ENCODE measurements at regions of chr1 and their contacts with region 1.

Region 1: GRCh38 chr1:110630839-110631663 is 24.9 kb upstream of the KCNA2 start:
- DNase-seq: peak; percentile 68 to 76
- H3K4me3 ChIP-seq: no peak overlapping the region
- H3K4me3 Mint-ChIP-seq: no peak overlapping the region
- H3K27ac Mint-ChIP-seq: no peak overlapping the region
- H3K4me1 ChIP-seq: no peaks in the 10 kb centered on the region
- H3K4me1 Mint-ChIP-seq: no peaks in the 10 kb centered on the region
- H3K27me3 ChIP-seq: no peaks in the 10 kb centered on the region
- H3K27me3 Mint-ChIP-seq: peaks cover 12% of the 10 kb centered on the region
- CTCF ChIP-seq: peak; percentile 47 to 69

Region 2: GRCh38 chr1:110766025-110766647 is 135.1 kb after region 1 on chr1:
- CTCF ChIA-PET with region 1: no interaction called
- POLR2A ChIA-PET with region 1: no interaction called
- intact Hi-C with region 1: loop called (anchors 1 kb)
- DNase-seq: no peak
- H3K4me3 ChIP-seq: no peak overlapping the region
- H3K4me3 Mint-ChIP-seq: no peak overlapping the region
- H3K27ac Mint-ChIP-seq: no peak overlapping the region
- H3K4me1 ChIP-seq: no peaks in the 10 kb centered on the region
- H3K4me1 Mint-ChIP-seq: no peaks in the 10 kb centered on the region
- H3K27me3 ChIP-seq: no peaks in the 10 kb centered on the region
- H3K27me3 Mint-ChIP-seq: peaks cover 9% of the 10 kb centered on the region
- CTCF ChIP-seq: peak; percentile 54 to 59

Measured in Caco-2 (cell line).